HCT116 (cell line): ENCODE measurements at regions of chr6 and their contacts with region 1.

Region 1: GRCh38 chr6:5302995-5303622 is 41.8 kb downstream of the FARS2 start:
- DNase-seq: peak; percentile 42
- ATAC-seq: peak; percentile 99
- H3K4me3 ChIP-seq: no peak overlapping the region
- H3K27ac ChIP-seq: no peak overlapping the region
- H3K4me1 ChIP-seq: peaks cover 0 to 6% of the 10 kb centered on the region in 2 experiments; a peak in 1 of 4 replicates
- H3K27me3 ChIP-seq: no peaks in the 10 kb centered on the region
- CTCF ChIP-seq: peak; percentile 42 to 79 (median 69); a peak in 5 of 6 replicates
- POLR2A ChIP-seq: no peak
- RAD21 ChIP-seq: peak; percentile 55

Region 2: GRCh38 chr6:5053038-5053437 is 250.1 kb before region 1 on chr6:
- CTCF ChIA-PET with region 1: no interaction called
- POLR2A ChIA-PET with region 1: no interaction called
- RAD21 ChIA-PET with region 1: no interaction called
- intact Hi-C with region 1: loop called (anchors 2 kb)
- DNase-seq: no peak
- ATAC-seq: no peak
- H3K4me3 ChIP-seq: no peak overlapping the region
- H3K27ac ChIP-seq: no peak overlapping the region
- H3K4me1 ChIP-seq: no peaks in the 10 kb centered on the region
- H3K27me3 ChIP-seq: no peaks in the 10 kb centered on the region
- CTCF ChIP-seq: no peak
- POLR2A ChIP-seq: no peak
- RAD21 ChIP-seq: no peak

Region 3: DNA sequence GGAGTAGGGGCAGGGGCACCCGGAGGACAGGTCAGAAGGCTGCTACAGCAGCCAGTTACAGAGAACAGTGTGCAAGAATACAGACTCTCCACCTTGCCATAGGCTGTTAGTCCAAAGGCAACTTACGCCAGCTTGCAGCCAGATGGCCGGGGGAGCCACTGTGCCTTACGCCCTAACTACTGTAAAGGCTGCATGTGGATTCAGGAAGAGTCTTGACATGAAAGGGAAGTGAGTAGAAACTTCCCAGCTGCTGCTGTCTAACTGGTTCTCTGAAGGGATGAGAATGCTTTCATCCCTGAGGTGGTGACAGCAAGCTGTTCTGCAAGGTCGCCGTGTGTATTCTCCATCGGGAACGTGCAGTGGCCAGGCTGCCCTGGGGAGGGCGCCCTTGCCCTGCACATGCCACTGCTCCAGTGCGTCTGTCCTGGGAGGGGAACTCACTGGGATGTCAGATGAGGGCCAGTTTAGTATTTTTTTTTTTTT is 88.5 kb before region 1 on chr6:
- CTCF ChIA-PET with region 1: interaction called, 4 read pairs
- POLR2A ChIA-PET with region 1: no interaction called
- RAD21 ChIA-PET with region 1: no interaction called
- intact Hi-C with region 1: loop called (anchors 1 kb)
- DNase-seq: peak; percentile 4
- ATAC-seq: peak; percentile 98
- H3K4me3 ChIP-seq: no peak overlapping the region
- H3K27ac ChIP-seq: no peak overlapping the region
- H3K4me1 ChIP-seq: no peaks in the 10 kb centered on the region
- H3K27me3 ChIP-seq: no peaks in the 10 kb centered on the region
- CTCF ChIP-seq: peak; percentile 75 to 85 (median 83)
- POLR2A ChIP-seq: no peak
- RAD21 ChIP-seq: peak; percentile 85

Region 4: DNA sequence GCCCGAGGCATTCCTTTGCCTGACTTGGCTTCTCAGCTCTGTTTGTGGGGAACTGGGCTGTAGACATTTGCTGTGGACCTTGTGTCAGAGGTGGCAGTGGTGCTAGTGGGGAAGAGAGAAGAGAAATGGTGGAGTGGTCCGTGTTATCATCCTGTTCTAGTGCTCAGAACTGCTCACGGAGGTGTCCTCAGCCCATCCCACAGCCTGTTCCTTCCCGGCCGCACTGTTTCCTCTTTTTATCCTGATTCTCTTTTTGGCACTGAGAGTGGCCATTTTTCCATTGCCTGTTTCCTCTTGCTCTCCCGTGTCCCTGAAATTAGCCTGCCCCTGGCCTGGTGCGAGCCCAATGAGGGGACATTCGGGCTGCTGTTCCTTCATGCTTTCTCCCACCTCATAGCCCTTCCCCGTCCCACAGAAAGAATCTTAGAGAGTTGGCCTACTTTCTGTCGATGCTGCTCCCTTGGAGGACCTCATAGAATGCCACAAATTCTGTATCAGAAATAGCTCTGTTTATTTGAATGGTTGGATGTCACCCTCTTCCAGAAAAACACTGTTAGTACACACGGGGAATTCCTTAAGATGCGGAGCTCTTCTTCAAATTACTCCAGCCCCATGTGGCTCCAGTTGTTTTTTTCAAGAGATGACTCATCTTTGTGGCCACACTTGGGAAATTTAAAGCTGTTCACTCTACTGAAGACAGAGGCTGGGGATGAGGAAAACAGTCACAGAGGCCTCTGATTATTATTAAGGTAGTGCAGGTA is 15.7 kb before region 1 on chr6:
- CTCF ChIA-PET with region 1: no interaction called
- POLR2A ChIA-PET with region 1: no interaction called
- RAD21 ChIA-PET with region 1: no interaction called
- intact Hi-C with region 1: no loop called
- DNase-seq: no peak
- ATAC-seq: no peak
- H3K4me3 ChIP-seq: no peak overlapping the region
- H3K27ac ChIP-seq: no peak overlapping the region
- H3K4me1 ChIP-seq: peaks cover 0 to 8% of the 10 kb centered on the region in 2 experiments; a peak in 2 of 4 replicates
- H3K27me3 ChIP-seq: no peaks in the 10 kb centered on the region
- CTCF ChIP-seq: no peak
- POLR2A ChIP-seq: no peak
- RAD21 ChIP-seq: no peak